Left ventricle myocardium inferior (tissue), 1 donor: ENCODE measurements at regions of chr11 and their contacts with region 1.

Region 1: DNA sequence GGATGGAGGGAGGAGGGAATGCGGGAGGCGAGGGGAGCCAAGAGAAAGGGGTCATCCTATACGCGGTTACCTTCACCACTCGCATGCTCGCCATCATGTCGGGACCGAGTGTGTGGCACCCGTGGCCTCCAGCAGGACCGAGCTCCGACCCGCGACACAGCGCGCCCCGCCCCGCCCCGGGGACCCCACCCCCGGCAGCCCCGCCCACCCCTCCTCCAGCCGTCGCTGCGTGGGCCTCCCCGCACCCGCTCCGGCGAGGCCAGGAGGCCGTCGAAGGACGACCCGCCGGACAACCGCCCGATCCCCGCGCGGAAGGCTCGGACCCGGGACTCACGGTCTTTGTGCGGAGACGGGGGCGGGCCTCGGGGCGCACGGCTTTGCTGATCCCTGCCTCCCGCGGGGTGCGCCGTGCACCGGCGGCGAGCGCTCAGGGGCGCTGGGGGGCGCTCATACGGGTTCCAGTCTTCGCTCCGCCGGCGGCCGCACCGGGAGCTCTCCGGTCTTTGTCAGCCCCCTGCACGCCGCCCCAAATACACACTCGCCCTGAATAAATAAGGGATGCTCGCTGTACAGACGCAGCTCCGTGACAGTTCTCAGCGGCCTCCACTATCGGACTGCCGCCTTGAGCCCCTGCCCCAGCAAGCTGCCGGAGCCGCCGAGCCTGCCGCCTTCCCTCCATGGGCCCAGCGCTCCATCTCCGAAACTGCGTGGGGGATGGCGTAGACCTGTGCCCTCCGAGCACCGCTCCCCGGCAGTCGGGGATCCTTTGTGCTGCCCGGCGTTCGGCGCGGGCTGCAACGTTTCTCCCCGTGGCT is at the start of gene UBE2L6:
- DNase-seq: peak; percentile 83
- H3K4me3 ChIP-seq: peak within 1 kb of the TSS; percentile 85
- H3K27ac ChIP-seq: peak within 1 kb of the TSS; percentile 90
- H3K4me1 ChIP-seq: peaks cover 37% of the 10 kb centered on the region
- H3K27me3 ChIP-seq: peaks cover 8% of the 10 kb centered on the region
- CTCF ChIP-seq: no peak
- total RNA-seq, gene UBE2L6: 19.0 TPM

Region 2: DNA sequence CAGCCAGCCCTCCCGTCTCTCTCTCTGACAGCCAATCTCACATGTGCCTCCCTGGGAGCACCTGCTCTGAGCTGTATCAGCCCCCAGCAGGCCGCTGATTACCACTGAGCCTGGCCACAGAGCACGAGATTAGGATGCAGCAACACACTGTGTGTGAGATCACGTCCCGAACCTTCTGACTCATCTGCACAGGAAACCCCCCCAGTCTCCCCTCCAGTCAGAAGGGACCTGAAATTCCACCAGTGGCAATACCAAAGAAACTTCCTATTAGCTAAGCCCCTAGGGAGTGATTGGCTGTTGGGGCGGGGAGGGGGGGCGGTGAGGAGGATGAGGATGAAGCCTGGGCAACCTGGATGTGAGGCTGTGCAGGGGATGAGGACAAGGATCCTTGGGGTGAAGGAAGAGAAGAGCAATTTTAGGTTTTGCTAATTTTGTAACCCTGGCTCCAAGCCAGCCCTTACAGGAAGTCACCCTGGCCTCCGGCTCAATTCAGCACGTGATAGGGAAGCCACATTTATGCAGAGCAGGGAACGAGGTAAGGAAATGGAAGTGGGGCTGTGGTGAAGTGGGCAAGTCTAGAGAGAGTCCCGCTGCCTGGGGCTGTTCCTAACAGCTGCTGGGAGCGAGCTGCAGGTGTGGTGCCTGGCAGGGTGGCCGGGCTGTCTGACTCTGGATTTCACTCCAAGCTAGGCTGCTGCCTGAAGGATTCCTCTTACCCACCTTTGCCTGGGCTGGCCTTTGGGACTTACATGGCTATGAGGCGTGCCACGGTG is 142.7 kb before region 1 on chr11:
- intact Hi-C with region 1: no loop called
- DNase-seq: peak; percentile 61
- H3K4me3 ChIP-seq: peak overlapping the region; percentile 72
- H3K27ac ChIP-seq: peak overlapping the region; percentile 96
- H3K4me1 ChIP-seq: peaks cover 79% of the 10 kb centered on the region
- H3K27me3 ChIP-seq: no peaks in the 10 kb centered on the region
- CTCF ChIP-seq: no peak

Region 3: DNA sequence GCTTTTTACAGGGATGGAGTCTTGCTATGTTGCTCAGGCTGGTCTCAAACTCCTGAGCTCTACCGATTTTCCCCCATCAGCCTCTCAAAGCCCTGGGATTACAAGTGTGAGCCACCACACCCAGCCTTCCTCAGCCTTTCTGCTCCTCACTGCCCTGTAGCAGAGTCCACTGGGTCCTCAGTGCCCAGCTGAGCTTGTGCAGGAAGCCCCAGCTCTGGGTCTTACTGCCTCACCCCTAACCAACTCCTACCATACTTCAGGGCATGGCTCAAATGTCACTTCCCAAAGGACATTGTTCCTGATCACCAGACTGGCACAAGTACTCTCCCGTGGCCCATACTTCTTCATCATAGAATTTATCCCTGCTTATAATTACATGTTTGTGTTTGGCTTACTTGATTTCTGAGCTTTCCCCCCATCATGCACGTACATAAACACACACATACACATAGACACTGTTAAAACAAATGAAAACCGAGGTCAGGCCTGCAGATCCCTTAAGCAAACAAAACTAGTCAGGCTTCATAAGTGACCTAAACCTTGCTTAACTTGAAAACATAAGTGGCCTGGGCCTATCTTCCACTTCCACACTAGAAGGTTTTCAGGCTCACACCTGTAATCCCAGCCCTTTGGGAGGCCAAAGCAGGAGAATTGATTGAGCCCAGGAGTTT is 126.8 kb before region 1 on chr11:
- intact Hi-C with region 1: no loop called
- DNase-seq: no peak
- H3K4me3 ChIP-seq: no peak overlapping the region
- H3K27ac ChIP-seq: no peak overlapping the region
- H3K4me1 ChIP-seq: no peaks in the 10 kb centered on the region
- H3K27me3 ChIP-seq: no peaks in the 10 kb centered on the region
- CTCF ChIP-seq: no peak

Region 4: DNA sequence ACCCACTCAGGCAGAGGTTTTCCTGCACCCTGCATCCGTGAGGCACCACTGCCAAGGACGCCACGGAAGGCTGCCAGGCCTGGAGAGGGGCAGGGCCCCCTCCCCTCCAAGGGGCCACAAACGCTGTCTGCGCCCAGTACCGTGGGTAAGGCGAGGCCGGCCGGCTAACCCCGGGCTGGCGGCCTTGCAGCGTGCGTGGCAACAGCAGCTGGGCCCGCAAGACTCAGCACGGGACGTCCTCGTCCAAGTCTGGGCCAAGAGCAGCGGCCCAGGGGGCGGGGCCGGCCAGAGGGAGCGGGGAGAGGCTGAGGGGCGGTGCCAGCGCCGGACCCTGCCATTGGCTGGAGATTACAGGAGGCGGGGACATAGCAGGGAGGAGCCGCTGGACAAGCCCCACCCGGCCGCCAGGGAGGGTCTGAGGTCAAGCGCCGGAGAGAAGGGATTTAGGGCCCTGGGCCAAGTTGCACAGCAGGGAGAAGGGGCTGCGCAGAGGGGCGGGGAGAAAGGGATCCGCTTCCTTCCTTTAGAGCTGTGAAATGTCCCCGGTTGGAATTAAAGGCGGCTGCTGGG is 68.2 kb before region 1 on chr11:
- intact Hi-C with region 1: no loop called
- DNase-seq: peak; percentile 98
- H3K4me3 ChIP-seq: peak overlapping the region; percentile 55
- H3K27ac ChIP-seq: peak overlapping the region; percentile 92
- H3K4me1 ChIP-seq: peaks cover 43% of the 10 kb centered on the region
- H3K27me3 ChIP-seq: no peaks in the 10 kb centered on the region
- CTCF ChIP-seq: no peak

Region 5: DNA sequence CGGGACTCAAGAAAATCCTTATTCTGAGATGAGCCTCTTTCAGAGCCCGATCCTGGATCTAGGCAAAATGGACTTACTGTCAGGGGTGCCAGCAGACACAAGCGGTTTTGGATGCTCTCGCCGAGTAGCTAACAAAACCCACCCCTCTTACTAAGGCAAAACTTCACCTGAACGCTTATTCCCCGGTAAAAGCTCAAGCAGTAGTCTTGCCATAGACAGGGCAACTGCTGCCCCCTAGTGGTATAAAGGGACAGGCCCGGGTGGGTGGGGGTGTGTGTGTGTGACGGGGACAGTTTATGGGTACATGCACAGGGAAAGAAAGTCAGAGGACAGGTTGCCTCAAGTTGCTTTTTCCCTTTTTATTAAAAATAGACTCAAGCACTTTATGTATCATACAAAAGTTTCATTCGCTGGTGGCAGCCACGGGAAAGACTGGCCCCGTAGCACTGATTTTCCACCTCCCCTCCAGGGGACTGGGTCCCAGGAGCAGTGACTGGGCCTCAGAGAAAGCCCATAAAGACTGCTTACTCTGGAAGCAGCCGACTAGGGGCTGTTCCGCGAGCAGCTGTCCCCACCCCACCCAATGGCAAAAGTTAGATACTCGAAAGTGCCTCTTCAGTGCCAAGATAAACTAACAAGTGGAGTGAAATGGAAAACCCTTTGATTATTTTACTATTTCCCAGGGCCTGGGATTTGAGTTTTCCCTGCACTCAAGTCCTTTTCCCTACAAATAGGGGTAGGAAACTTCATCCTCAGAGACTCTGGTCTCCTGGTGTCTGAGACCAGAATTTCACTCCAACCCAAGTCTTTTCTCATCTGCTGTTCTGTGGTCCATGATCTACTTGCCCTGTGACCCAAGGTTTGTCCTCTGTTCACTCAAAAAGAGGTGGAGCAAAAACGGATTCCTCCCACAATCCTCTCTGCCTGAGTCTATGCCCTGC is 77.3 kb after region 1 on chr11:
- intact Hi-C with region 1: loop called (anchors 5 kb)
- DNase-seq: peak; percentile 75
- H3K4me3 ChIP-seq: no peak overlapping the region
- H3K27ac ChIP-seq: peak overlapping the region; percentile 77
- H3K4me1 ChIP-seq: peaks cover 76% of the 10 kb centered on the region
- H3K27me3 ChIP-seq: peaks cover 47% of the 10 kb centered on the region
- CTCF ChIP-seq: peak; percentile 90

Region 6: GRCh38 chr11:57873196-57873911 is 305.6 kb after region 1 on chr11:
- intact Hi-C with region 1: no loop called
- DNase-seq: no peak
- H3K4me3 ChIP-seq: no peak overlapping the region
- H3K27ac ChIP-seq: no peak overlapping the region
- H3K4me1 ChIP-seq: no peaks in the 10 kb centered on the region
- H3K27me3 ChIP-seq: peaks cover 4% of the 10 kb centered on the region
- CTCF ChIP-seq: no peak